Heart right ventricle (tissue), 16 donors: ENCODE measurements at regions of chr5 and their contacts with region 1.

Region 1: GRCh38 chr5:80093796-80094195 is 58.6 kb downstream of the THBS4 start:
- DNase-seq: no peak
- ATAC-seq: peak in 1 of 8 donors; percentile 20
- H3K4me3 ChIP-seq: no peak overlapping the region
- H3K27ac ChIP-seq: peak overlapping the region in 1 of 10 donors; percentile 11
- H3K4me1 ChIP-seq: peaks cover 0 to 15% (median 7%) of the 10 kb centered on the region in 9 donors
- H3K27me3 ChIP-seq: no peaks in the 10 kb centered on the region
- CTCF ChIP-seq: no peak

Region 2: GRCh38 chr5:78416677-78417425 is 1676.9 kb before region 1 on chr5:
- intact Hi-C with region 1: no loop called
- DNase-seq: no peak
- ATAC-seq: no peak
- H3K4me3 ChIP-seq: no peak overlapping the region
- H3K27ac ChIP-seq: no peak overlapping the region
- H3K4me1 ChIP-seq: peaks cover 0 to 7% (median 0%) of the 10 kb centered on the region in 9 donors
- H3K27me3 ChIP-seq: no peaks in the 10 kb centered on the region
- CTCF ChIP-seq: no peak

Region 3: DNA sequence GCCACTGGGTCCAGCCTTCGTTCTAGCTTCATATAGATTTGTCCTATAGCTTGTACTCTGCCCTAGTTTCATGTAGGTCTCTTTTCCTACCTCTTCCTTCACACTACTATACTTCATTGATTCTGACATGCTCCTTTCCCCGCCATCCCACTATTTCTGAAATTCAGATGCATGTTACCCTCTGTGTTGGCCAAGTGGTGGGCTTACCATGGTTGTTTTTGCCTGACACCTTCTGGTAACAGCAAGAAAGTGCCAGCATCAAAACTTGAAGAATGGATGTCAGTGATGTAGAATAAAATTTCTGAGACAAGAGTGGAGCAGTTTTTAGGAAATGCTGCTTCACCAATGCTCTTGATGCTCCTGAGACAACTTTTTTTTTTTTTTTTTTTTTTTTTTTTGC is 181.6 kb after region 1 on chr5:
- intact Hi-C with region 1: loop called (anchors 1 to 10 kb)
- DNase-seq: no peak
- ATAC-seq: peak in 3 of 8 donors; percentile 44 to 57 (median 56)
- H3K4me3 ChIP-seq: no peak overlapping the region
- H3K27ac ChIP-seq: no peak overlapping the region
- H3K4me1 ChIP-seq: peaks cover 0 to 4% (median 0%) of the 10 kb centered on the region in 9 donors
- H3K27me3 ChIP-seq: no peaks in the 10 kb centered on the region
- CTCF ChIP-seq: peak in 8 of 9 donors; percentile 40 to 69 (median 51)

Region 4: GRCh38 chr5:80308526-80308925 is 214.7 kb after region 1 on chr5:
- intact Hi-C with region 1: loop called (anchors 1 to 5 kb)
- DNase-seq: no peak
- ATAC-seq: no peak
- H3K4me3 ChIP-seq: no peak overlapping the region
- H3K27ac ChIP-seq: no peak overlapping the region
- H3K4me1 ChIP-seq: no peaks in the 10 kb centered on the region
- H3K27me3 ChIP-seq: no peaks in the 10 kb centered on the region
- CTCF ChIP-seq: no peak

Region 5: DNA sequence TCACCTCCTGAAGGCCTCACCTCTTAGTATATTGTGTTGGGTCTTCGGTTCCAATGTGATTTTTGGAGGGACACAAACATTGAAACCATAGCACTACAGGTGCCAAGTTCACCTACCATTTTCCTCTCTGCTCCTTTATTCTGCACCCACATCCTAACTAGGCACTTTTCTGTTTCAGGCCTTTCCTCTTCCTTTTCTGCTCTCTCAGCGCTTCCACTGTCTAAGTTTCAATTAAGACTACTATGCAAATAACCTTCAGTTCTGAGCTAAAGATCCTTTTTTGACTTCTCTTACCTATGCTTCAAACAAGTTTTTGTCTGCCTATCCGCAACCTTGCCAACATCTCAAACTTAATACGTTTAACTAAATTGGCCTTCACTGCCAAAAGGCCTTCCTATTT is 288.7 kb after region 1 on chr5:
- intact Hi-C with region 1: no loop called
- DNase-seq: no peak
- ATAC-seq: no peak
- H3K4me3 ChIP-seq: no peak overlapping the region
- H3K27ac ChIP-seq: no peak overlapping the region
- H3K4me1 ChIP-seq: no peaks in the 10 kb centered on the region
- H3K27me3 ChIP-seq: no peaks in the 10 kb centered on the region
- CTCF ChIP-seq: no peak